ENCODE measurements at regions of chrX and their contacts with region 1.

Region 1: DNA sequence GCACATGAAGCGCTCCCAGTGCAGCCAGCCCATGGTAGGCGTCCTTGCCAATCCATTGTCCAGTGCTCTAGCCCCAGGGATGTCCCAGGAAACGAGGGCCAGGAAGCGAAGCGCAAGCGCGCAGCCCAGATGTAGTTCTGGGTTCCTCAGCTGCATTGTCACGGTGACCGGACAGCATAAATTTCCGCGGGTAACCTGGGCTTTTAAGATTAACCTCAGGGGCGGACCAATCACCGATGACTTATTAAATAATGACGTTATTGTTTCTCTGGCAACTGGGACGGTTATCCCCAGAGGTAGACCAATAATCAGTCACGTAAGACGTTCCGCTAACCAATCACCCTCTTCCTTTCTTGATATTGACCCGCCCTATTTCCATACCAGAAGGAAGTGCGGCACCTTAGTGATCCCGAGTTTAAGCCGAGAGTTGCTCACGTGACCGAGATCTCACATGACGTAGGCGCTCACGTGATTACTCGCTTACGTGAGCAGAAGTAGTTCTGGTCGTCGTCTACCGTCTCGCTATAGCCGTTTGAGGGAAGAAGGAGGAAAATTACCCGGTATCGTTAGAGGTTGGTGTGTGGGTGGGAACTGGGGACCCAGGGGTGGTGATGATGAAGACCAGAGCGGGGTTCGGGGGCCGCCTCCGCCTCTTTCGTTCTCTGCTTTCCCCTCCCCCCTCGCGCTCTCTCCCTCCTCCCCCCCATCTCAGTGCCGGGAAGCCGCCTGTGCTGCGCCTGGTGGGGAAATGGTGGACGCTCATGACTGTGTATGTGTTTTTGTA is at the starts of genes GLA and HNRNPH2:
- DNase-seq: peak; percentile 82
- H3K4me3 Mint-ChIP-seq: peak within 1 kb of the TSS; percentile 99
- H3K27ac Mint-ChIP-seq: peak within 1 kb of the TSS; percentile 98
- H3K4me1 Mint-ChIP-seq: peaks cover 35% of the 10 kb centered on the region
- H3K27me3 Mint-ChIP-seq: no peaks in the 10 kb centered on the region
- total RNA-seq, gene GLA: 65.7 and 67.9 TPM in 2 replicates
- total RNA-seq, gene HNRNPH2: 20.6 and 21.3 TPM in 2 replicates

Region 2: DNA sequence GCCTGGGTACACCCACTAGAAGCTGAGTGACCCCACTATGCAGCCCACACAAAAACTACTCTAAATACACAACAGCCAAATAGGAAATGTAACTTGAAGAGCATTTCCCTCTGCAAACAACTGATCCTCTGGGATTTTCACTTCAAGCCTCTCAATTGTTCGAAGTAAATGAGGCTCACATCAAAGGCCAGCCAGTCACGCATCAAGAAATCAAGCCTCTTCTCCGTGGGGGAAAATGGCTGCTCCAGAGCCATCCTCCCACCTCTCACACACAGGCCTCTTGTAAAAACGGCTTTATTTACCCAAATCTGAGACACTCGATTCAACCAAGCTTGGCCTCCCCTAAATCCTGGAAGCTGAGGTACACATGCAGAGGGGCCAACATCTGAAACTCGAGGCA is 1012.2 kb before region 1 on chrX:
- intact Hi-C with region 1: no loop called
- DNase-seq: no peak
- H3K4me3 Mint-ChIP-seq: no peak overlapping the region
- H3K27ac Mint-ChIP-seq: no peak overlapping the region
- H3K4me1 Mint-ChIP-seq: no peaks in the 10 kb centered on the region
- H3K27me3 Mint-ChIP-seq: no peaks in the 10 kb centered on the region

Region 3: DNA sequence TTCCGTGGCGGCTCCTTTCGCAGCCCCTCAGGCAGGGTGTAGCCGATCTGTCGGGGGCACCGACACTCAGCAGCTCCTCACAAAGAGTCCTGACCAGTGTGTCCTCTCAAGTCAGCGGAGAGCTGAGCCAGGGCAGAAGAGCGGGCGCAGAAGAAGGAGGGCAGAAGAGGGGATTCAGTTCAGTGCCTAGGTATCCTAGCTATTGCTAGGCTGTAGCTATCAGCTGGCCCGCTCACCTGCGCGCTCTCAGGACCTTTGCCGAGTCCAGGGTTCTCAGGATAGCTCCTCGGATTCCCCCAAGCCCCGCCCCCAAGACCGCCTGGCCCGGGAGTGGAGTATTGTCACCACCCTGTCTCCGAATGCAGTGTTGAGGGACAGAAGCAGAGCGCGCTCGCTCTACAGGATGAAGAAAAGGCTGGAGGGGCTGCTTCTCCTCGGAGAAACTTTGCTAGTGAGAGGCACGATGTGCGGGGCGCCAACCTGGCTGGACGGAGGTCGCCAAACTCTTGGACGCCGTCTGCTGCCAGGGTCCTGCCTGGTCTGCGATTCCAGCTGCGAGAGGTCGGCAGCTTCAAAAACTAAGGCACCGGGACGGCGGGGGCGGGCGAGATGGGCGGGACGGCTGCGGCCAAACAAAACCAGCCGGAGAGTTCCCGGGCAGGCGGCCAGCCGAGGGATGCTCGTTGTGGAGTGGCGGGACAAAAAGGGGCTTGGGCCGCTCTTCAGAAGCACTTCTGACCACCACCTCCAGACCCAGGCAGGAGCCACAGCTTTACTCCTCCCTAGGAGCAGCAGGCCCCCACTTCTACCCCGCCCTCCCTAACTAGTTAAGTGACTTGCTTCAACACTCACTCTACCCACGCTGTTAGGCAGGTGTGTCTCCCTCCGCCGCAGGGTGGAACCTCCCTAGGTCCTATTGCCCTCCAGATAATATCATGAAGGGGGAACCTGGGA is 479.0 kb before region 1 on chrX and contains the start of gene XKRX:
- intact Hi-C with region 1: loop called (anchors 5 kb)
- DNase-seq: peak; percentile 5
- H3K4me3 Mint-ChIP-seq: peak within 1 kb of the TSS; percentile 85
- H3K27ac Mint-ChIP-seq: peak within 1 kb of the TSS; percentile 34
- H3K4me1 Mint-ChIP-seq: peaks cover 22% of the 10 kb centered on the region
- H3K27me3 Mint-ChIP-seq: no peaks in the 10 kb centered on the region
- total RNA-seq, gene XKRX: 0.39 and 0.51 TPM in 2 replicates

Region 4: GRCh38 chrX:101097546-101098453 is 310.1 kb before region 1 on chrX and contains the start of gene CENPI:
- intact Hi-C with region 1: loop called (anchors 5 kb)
- DNase-seq: peak; percentile 91
- H3K4me3 Mint-ChIP-seq: peak within 1 kb of the TSS; percentile 94
- H3K27ac Mint-ChIP-seq: peak within 1 kb of the TSS; percentile 87
- H3K4me1 Mint-ChIP-seq: peaks cover 38% of the 10 kb centered on the region
- H3K27me3 Mint-ChIP-seq: no peaks in the 10 kb centered on the region
- total RNA-seq, gene CENPI: 11.4 and 13.1 TPM in 2 replicates

Region 5: DNA sequence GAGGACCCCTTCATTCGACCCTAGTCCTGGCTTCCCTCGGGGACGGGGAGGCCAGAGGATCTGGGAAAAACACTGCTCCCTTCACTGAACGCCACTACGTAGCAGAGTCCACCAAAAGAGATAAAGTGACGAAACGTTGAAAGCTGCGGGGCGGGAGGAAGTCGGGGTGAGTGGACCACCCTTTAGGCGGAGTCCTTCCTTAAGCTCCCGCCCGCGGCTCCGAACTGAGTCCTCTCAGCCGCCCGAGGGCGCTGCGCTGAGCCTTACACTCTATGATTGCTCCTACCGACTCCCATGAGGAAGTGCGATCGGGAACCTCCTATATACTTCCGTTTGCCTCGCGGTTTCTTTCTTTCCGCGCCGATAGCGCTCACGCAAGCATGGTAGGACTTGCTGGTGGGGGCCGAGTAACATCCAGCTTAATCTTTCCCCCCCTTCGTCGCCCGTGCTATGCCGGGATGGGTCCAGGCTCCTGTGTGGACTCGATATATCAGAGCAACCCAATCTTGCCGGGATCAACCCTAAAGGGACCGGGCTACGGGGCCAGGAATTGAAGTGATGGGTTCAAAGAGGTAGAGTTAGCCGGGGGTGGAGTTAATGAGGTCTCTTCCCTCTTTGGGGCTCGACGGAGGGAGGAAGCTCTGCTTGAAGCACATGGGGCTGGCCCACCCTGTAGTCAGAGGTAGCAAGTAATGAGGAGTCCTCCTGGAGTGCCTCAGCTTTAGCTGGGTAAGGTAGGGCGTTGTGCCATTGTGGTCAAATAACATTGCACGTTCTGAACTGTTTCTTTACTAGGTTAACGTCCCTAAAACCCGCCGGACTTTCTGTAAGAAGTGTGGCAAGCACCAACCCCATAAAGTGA is 17.0 kb before region 1 on chrX and contains the start of gene RPL36A:
- intact Hi-C with region 1: loop called (anchors 1 kb)
- DNase-seq: peak; percentile 75
- H3K4me3 Mint-ChIP-seq: peak within 1 kb of the TSS; percentile 98
- H3K27ac Mint-ChIP-seq: peak within 1 kb of the TSS; percentile 94
- H3K4me1 Mint-ChIP-seq: peaks cover 7% of the 10 kb centered on the region
- H3K27me3 Mint-ChIP-seq: peaks cover 2% of the 10 kb centered on the region
- total RNA-seq, gene RPL36A: 226 and 269 TPM in 2 replicates

Region 6: GRCh38 chrX:102768987-102769761 is 1361.2 kb after region 1 on chrX:
- intact Hi-C with region 1: loop called (anchors 10 kb)
- DNase-seq: peak; percentile 78
- H3K4me3 Mint-ChIP-seq: peak overlapping the region; percentile 92
- H3K27ac Mint-ChIP-seq: peak overlapping the region; percentile 96
- H3K4me1 Mint-ChIP-seq: peaks cover 12% of the 10 kb centered on the region
- H3K27me3 Mint-ChIP-seq: no peaks in the 10 kb centered on the region

Measured in activated T-helper 1 cell treated with anti-CD3 and anti-CD28 coated beads, Interleukin-12 subunit alpha, Interleukin-12 subunit beta, Interleukin-2, Interleukin-4 antibody, amounts not matched to agents 30 ng/mL and 10 ng/mL and 1 ng/mL, durations not matched to agents 14 hours and 24 hours and 36 hours (primary cell).